Activated B cell treated with CpG ODN at 0.5 μM for 24 hours (primary cell): ENCODE measurements at regions of chr2 and their contacts with region 1.

Region 1: GRCh38 chr2:134314681-134315368 is 61.0 kb downstream of the MGAT5 start:
- DNase-seq: no peak
- ATAC-seq: no peak
- H3K4me3 Mint-ChIP-seq: no peak overlapping the region
- H3K27ac Mint-ChIP-seq: peak overlapping the region; percentile 42
- H3K4me1 Mint-ChIP-seq: peaks cover 89% of the 10 kb centered on the region
- H3K27me3 Mint-ChIP-seq: no peaks in the 10 kb centered on the region
- CTCF ChIP-seq: no peak

Region 2: DNA sequence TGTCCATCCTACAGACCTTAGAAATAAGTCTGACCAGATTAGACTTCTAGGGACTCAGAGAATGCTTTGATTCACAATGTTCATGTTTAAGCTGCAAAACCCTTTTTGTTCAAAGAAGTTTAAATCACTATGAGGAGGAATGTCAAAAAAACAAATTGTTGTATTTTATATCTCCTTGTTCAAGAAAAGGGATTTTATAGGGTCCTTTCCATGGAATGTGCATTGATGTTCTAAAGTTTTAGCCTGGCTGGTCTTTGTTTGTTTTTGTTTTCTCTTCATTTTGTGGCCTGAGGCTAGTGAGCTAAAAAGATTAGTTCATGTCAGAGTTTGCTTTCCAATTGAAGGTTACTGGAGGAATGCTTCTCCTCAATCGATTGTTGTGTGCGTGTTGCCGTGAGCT is 16.3 kb after region 1 on chr2:
- CTCF ChIA-PET with region 1: no interaction called
- POLR2A ChIA-PET with region 1: interaction called, 3 read pairs
- intact Hi-C with region 1: loop called (anchors 2 kb)
- DNase-seq: no peak
- ATAC-seq: no peak
- H3K4me3 Mint-ChIP-seq: no peak overlapping the region
- H3K27ac Mint-ChIP-seq: peak overlapping the region; percentile 8
- H3K4me1 Mint-ChIP-seq: peaks cover 58% of the 10 kb centered on the region
- H3K27me3 Mint-ChIP-seq: no peaks in the 10 kb centered on the region
- CTCF ChIP-seq: no peak